ENCODE measurements at regions of chr6 and their contacts with region 1.

Region 1: GRCh38 chr6:166627033-166627874 is at the start of gene RPS6KA2:
- DNase-seq: peak; percentile 100
- H3K4me3 ChIP-seq: peak within 1 kb of the TSS; percentile 74 to 87 (median 83)
- H3K27ac ChIP-seq: peak within 1 kb of the TSS; percentile 90
- H3K4me1 ChIP-seq: peaks cover 37% of the 10 kb centered on the region
- H3K27me3 ChIP-seq: no peaks in the 10 kb centered on the region
- CTCF ChIP-seq: peak in 1 of 2 donors; percentile 16
- POLR2A ChIP-seq: peak; percentile 90
- total RNA-seq, gene RPS6KA2: 72.6 and 75.8 TPM in 2 replicates

Region 2: DNA sequence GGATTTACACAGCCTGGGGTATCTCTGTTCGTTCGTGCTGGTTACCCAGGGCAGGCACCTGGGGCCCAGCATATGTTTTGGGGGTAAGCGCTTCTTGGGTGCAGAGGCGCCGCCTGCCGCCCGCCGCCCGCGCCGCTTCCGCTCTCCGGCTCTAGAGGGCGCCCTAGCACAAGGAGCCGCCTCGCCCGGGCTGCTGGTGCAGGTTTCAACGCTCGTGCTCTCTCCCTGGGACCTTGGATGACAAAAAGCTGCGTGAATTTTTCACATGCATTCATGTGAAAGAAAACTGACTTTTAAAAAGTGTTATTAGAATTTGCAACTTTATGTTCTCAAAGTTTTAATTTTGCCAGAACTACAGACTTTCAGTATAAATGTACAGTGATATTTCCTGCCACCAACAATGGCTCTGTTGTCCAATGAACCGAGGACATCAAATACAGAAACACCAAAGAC is 351.5 kb before region 1 on chr6:
- CTCF ChIA-PET with region 1: no interaction called
- POLR2A ChIA-PET with region 1: no interaction called
- dilution Hi-C with region 1: no loop called
- intact Hi-C with region 1: loop called (anchors 5 kb)
- DNase-seq: peak; percentile 54
- H3K4me3 ChIP-seq: no peak overlapping the region
- H3K27ac ChIP-seq: no peak overlapping the region
- H3K4me1 ChIP-seq: no peaks in the 10 kb centered on the region
- H3K27me3 ChIP-seq: no peaks in the 10 kb centered on the region
- CTCF ChIP-seq: peak; percentile 93 to 98
- POLR2A ChIP-seq: no peak

Region 3: DNA sequence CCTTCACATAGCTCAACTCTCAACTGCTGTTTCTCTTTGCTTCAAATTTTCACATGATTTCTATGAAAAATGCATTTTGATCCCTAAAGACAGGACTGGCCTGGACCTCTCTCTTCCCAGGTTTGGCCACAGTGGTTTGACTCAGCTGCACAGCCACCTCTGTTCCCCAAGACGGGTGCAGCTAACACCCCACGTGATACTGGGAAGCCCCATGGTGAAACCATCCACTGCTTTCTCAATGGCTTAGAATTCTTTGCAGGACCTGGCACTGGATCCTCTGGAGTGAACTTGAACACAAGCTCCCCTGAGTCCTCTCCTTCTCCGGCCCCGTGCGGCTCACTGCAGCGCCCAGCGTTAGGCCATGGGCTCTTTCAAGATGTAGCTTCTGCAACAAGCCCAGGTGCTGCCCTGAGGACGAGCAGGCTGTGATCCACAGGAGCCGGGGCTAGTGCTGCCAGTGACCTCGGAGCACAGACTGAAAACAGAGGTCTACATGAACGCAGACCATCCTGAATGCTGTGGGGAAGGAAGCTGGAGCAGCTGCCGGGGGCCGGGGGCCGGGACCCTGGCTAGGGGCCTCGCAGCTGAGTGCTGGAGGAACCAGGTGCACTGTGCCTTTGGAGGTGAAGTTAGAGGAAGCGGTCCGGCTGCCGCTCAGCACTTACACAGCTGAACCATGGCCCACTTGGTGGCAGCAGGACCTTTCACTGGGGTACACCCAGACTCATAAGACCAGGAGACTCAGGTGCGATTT is 185.8 kb before region 1 on chr6:
- CTCF ChIA-PET with region 1: no interaction called
- POLR2A ChIA-PET with region 1: no interaction called
- dilution Hi-C with region 1: no loop called
- intact Hi-C with region 1: loop called (anchors 5 kb)
- DNase-seq: no peak
- H3K4me3 ChIP-seq: no peak overlapping the region
- H3K27ac ChIP-seq: no peak overlapping the region
- H3K4me1 ChIP-seq: peaks cover 10% of the 10 kb centered on the region
- H3K27me3 ChIP-seq: no peaks in the 10 kb centered on the region
- CTCF ChIP-seq: no peak
- POLR2A ChIP-seq: no peak

Region 4: DNA sequence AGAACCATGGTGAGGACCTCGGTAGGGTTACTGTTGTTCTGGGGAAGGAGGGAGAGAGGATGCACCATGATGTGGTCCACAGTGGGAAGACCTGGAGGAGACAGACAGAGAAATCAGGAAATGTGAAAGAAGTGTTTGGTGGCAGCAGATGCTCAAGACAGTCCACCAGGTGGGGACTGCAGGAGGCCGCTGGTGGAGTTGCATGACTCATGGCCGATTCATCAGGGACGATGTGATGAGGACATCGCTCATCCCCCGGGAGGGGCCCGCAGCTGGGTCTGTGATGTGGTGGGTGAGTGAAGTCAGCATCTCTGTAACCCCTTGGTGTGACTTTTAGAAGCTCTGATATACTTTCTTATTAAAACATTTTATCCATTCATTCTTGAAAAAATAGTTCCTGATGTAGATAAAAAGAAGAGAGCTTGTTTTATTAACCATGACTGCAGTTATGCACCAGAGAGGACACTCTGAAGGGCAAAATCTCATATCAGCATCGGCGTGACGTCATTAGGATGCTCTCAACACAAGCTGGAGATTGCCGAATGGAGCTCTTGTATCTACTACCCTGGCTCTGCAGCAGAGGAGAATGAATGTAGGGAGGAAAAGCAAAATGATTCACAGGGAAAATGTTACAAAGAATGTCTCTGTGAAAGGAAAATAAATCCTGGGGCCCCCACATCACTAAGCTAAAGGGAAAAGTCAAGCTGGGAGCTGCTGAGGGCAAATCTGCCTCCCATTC is 112.0 kb before region 1 on chr6:
- CTCF ChIA-PET with region 1: interaction called, 12 read pairs
- POLR2A ChIA-PET with region 1: no interaction called
- dilution Hi-C with region 1: no loop called
- intact Hi-C with region 1: loop called (anchors 1 kb)
- DNase-seq: peak; percentile 56
- H3K4me3 ChIP-seq: no peak overlapping the region
- H3K27ac ChIP-seq: no peak overlapping the region
- H3K4me1 ChIP-seq: peaks cover 6% of the 10 kb centered on the region
- H3K27me3 ChIP-seq: no peaks in the 10 kb centered on the region
- CTCF ChIP-seq: peak; percentile 23 to 32
- POLR2A ChIP-seq: no peak

Region 5: DNA sequence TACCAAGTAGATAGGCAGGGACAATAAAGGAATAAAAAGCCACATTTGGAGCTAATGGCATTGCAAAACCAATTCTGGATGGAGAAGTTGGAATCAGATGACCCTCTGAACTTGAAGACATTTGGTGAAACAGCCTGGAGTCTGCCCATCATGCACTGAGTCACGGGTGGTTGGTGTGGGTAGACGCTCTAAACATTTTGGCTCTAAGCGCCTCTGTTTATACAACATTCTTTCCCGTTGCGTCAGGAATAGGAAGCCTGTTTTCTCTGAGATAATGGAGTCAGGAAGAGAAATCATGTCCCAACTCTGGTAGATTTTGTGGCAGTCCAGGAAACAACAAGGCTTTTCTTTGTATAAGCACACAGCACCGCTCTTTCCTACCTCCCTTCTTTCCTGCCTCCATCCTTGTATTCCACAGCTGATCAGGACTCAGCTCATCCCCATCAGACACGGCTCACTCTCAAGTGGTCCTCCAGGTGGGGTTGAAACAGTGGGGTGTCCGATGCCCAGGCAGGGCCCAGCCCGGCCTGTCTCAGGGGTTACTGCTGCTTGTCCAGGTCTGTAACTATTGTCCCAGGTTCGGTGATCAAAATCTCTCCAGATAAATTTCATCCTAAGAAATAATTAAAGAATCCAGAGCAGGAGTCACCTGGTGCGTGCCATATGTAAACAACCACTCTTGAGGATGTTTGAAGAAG is 28.7 kb before region 1 on chr6:
- CTCF ChIA-PET with region 1: interaction called, 6 read pairs
- POLR2A ChIA-PET with region 1: interaction called, 17 read pairs
- dilution Hi-C with region 1: no loop called
- intact Hi-C with region 1: loop called (anchors 1 kb)
- DNase-seq: peak; percentile 98
- H3K4me3 ChIP-seq: peak overlapping the region in 1 of 3 experiments; percentile 12
- H3K27ac ChIP-seq: peak overlapping the region; percentile 98
- H3K4me1 ChIP-seq: peaks cover 42% of the 10 kb centered on the region
- H3K27me3 ChIP-seq: no peaks in the 10 kb centered on the region
- CTCF ChIP-seq: no peak
- POLR2A ChIP-seq: peak; percentile 89

Region 6: DNA sequence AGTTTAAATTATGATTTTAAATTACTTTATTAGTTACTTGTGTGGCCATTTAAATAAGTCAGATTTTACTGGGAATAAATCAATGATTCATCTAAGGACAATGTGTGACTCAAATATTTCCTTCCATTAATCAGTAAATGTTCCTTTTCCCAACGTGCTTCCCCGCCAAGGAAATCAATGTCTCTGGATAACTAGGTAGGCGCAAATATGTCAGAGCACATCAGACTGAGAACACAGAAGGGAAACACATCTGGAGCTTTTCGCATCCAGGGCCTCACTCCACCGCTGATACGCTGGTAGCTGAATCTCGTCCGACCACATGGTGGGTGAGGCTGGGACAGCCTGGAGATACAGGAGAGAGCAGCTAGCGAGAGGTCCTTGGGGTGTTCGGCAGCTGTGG is 56.2 kb after region 1 on chr6:
- CTCF ChIA-PET with region 1: interaction called, 3 read pairs
- POLR2A ChIA-PET with region 1: no interaction called
- dilution Hi-C with region 1: no loop called
- intact Hi-C with region 1: loop called (anchors 1 kb)
- DNase-seq: peak; percentile 75
- H3K4me3 ChIP-seq: no peak overlapping the region
- H3K27ac ChIP-seq: peak overlapping the region; percentile 66
- H3K4me1 ChIP-seq: peaks cover 14% of the 10 kb centered on the region
- H3K27me3 ChIP-seq: no peaks in the 10 kb centered on the region
- CTCF ChIP-seq: no peak
- POLR2A ChIP-seq: no peak

Region 7: DNA sequence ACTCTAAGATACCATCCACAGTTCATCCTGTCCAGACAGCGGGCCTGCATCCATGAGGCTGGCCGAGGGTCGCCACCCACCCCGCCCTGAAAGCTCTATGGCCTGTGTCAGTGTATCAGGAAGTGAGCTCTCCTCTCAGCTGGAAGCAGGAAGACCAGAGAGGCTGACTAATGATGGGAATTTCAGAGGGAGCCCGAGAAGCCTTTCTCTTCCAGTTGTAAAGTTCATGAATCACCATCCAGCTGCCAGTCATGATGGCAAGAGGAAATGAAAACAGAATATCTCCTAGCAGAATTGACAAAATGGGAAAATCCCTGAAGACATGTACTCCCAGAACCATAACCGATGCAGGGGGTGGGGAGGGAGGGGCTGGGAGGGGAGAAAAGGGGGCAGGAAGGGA is 109.4 kb after region 1 on chr6:
- CTCF ChIA-PET with region 1: no interaction called
- POLR2A ChIA-PET with region 1: interaction called, 3 read pairs
- dilution Hi-C with region 1: no loop called
- intact Hi-C with region 1: loop called (anchors 1 kb)
- DNase-seq: peak; percentile 89
- H3K4me3 ChIP-seq: no peak overlapping the region
- H3K27ac ChIP-seq: peak overlapping the region; percentile 66
- H3K4me1 ChIP-seq: peaks cover 10% of the 10 kb centered on the region
- H3K27me3 ChIP-seq: no peaks in the 10 kb centered on the region
- CTCF ChIP-seq: no peak
- POLR2A ChIP-seq: no peak

Region 8: DNA sequence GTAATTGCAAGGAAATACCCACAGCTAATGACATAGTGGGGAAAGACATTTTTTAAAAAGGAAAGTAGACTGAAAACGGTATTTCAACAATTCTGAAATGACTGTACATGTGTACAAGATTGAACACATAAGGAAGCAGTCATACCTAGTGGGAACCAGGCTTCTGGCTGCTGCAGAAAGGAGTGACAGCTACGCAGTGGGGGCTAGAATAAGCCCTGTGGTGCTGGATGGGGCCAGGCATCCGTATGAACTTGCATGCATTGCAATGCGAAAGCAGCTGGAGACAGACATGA is 585.4 kb after region 1 on chr6:
- CTCF ChIA-PET with region 1: no interaction called
- POLR2A ChIA-PET with region 1: no interaction called
- dilution Hi-C with region 1: no loop called
- intact Hi-C with region 1: no loop called
- DNase-seq: no peak
- H3K4me3 ChIP-seq: no peak overlapping the region
- H3K27ac ChIP-seq: no peak overlapping the region
- H3K4me1 ChIP-seq: no peaks in the 10 kb centered on the region
- H3K27me3 ChIP-seq: no peaks in the 10 kb centered on the region
- CTCF ChIP-seq: no peak
- POLR2A ChIP-seq: no peak

Measured in endothelial cell of umbilical vein (primary cell).